GM18951 (cell line): ENCODE measurements at regions of chr12 and their contacts with region 1.

Region 1: GRCh38 chr12:89451841-89452251 is 72.8 kb downstream of the GALNT4 start:
- POLR2A ChIP-seq: no peak

Region 2: DNA sequence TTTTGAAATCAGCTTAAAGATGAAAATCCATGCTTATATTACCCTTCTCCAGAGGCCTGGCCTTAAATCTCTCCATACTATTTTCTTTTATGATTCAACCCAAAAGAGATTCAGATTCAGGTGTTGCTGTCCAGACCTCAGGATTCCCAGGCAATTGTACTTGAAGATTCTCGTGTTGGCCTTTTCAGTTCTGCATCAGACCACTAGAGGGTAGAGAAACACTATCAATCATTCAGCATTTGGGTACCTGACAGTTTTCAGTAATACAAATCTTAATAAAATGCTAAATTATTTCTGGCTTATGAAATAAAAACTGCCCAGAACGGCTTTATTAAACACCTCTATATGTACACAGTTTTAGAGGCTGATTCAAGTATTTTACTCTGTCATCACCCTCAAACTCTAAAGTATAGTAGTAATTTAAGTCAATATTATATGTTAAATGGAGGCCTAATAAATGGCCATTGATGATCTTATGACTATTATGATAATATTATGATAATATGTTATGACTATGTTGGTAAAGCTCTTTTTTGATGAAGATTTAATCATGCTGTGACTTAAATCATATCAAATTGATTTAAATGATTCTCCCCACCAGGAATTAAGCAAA is 400.7 kb before region 1 on chr12:
- in situ Hi-C with region 1: loop called (anchors 10 kb)
- POLR2A ChIP-seq: no peak

Region 3: GRCh38 chr12:89710873-89711750 is 259.3 kb after region 1 on chr12:
- in situ Hi-C with region 1: no loop called
- POLR2A ChIP-seq: no peak